Upper lobe of right lung (tissue), 1 donor: ENCODE measurements at regions of chr3 and their contacts with region 1.

Region 1: DNA sequence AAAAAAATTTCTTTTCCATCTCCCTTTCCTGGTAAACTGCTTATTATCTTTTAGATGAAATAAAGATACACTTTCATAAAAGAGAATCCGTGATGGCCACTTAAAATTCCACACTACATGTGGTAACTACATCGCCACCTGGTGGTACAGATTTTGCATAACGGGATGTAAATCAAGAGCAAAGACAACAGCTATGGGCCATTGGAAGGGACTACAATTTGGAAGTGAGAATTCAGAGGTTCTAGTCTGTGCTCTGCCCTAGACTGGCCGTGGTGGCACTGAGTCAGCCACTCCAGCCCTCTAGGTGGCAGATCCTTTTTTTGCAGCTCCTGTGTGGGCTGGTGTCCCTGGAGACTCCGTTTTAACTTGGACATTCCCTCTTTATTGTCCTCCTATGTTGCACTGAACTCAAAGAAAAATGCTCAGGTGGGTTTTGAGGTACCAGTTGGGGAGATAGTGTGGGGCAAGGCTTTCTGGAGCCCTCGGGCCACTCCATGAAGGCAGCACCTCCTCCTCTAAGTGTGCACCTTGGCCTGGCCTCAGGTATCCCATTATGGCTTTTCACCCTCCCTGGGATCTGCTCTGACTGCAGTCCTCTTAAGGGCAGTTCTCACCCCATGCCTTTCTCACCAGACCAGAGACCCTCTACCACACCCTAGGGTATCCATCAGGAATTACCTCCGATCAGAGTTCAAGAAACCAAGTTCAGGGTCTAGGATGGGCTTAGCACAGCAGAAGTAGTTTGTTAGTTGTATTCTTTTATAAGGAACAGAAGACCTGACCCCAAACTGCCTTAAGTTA is 54.9 kb downstream of the SPSB4 start:
- DNase-seq: no peak
- ATAC-seq: peak; percentile 72
- H3K4me3 ChIP-seq: no peak overlapping the region
- H3K27ac ChIP-seq: no peak overlapping the region
- H3K4me1 ChIP-seq: no peaks in the 10 kb centered on the region
- H3K27me3 ChIP-seq: no peaks in the 10 kb centered on the region
- CTCF ChIP-seq: peak; percentile 76

Region 2: DNA sequence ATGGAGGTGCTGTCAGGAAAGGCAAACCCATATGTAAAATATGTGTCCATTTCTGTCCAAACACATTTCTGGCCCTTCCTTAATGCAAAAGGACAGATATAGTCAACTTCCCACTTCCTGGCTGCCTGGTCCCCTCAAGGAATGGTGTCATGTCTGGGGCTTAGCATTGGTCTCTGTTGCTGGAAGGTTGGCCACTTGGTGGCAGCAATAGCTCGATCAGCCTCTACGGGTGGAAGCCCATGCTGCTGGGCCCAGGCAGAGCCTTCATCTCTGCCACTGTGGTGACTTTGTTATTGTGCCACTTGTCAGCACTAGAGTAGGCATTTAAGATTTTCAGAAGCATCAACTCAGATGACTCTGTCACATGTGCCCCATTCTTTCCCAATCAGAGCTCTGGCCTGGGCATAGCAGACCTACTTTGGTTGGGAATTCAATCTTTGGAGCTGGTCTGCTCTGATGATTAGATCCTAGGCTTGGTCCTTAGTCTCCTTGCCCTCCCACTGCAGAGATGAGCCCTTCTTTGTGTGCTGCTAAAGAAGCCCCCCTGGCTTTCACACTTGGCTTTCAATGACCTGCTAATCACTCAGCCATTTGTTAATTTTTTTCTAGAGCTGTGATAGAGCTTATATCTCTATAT is 105.9 kb before region 1 on chr3:
- intact Hi-C with region 1: loop called (anchors 10 kb)
- DNase-seq: peak; percentile 75
- ATAC-seq: peak; percentile 96
- H3K4me3 ChIP-seq: no peak overlapping the region
- H3K27ac ChIP-seq: no peak overlapping the region
- H3K4me1 ChIP-seq: no peaks in the 10 kb centered on the region
- H3K27me3 ChIP-seq: no peaks in the 10 kb centered on the region
- CTCF ChIP-seq: peak; percentile 67

Region 3: DNA sequence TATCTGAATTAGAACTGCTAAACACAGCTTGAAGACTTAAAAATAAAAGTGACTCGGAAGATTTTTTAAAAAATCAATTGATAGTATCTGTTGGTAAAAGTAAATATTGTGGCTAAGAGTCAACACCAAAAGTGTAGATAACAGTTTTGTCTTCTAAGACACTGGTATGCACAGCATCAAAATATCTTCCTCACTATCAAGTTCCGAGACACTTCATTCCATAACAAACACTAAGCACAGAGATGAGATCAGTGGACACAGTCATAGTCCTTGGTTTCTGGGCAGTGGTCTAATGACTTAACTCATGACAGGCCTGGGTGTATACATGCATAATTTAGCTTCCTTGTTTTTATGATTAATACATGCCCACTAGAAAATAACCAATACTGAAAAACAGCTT is 188.8 kb after region 1 on chr3:
- intact Hi-C with region 1: no loop called
- DNase-seq: no peak
- ATAC-seq: peak; percentile 69
- H3K4me3 ChIP-seq: peak overlapping the region; percentile 45
- H3K27ac ChIP-seq: peak overlapping the region; percentile 49
- H3K4me1 ChIP-seq: peaks cover 12% of the 10 kb centered on the region
- H3K27me3 ChIP-seq: no peaks in the 10 kb centered on the region
- CTCF ChIP-seq: no peak